Heart left ventricle (tissue), 16 donors: ENCODE measurements at regions of chr3 and their contacts with region 1.

Region 1: GRCh38 chr3:171829841-171830517 is 13.2 kb upstream of the TMEM212 start:
- DNase-seq: peak; percentile 84 to 92 (median 88)
- ATAC-seq: peak; percentile 92 to 95 (median 93)
- H3K4me3 ChIP-seq: no peak overlapping the region
- H3K27ac ChIP-seq: peak overlapping the region; percentile 32 to 81 (median 50)
- H3K4me1 ChIP-seq: peaks cover 0 to 49% (median 28%) of the 10 kb centered on the region in 12 donors
- H3K27me3 ChIP-seq: no peaks in the 10 kb centered on the region
- CTCF ChIP-seq: peak; percentile 40 to 87 (median 70)
- POLR2A ChIP-seq: no peak

Region 2: DNA sequence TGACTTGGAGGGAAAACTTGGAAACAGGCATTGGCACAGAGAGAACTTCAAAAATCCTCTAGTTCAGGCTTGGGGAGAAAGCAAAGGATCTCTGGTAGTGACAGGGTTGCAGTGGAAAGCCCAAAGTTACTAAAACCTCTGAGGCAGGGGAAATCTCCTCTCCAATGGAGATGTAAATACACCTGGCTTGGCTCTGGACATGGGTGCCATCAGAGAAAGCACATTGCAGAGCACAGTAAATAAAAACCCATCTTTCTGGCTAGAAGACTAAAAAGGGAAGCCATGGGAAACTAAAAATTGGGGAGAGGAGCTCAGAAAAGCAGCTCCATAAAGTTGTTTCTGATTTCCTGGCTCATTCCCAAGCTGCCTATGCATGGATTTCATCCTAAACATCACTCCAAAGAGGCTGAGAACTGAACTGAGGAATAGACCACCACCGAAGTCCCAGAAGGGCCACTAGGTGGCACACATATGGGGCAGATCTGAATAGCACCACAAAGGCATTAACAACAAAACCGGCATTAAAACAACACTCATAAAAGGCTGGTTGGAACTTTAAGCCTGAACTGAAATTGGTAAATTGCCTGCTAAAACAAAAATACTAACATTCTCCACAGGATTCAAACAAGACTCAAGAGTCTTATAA is 126.1 kb before region 1 on chr3:
- intact Hi-C with region 1: loop called in 2 of 10 experiments (anchors 10 kb)
- DNase-seq: no peak
- ATAC-seq: no peak
- H3K4me3 ChIP-seq: no peak overlapping the region
- H3K27ac ChIP-seq: no peak overlapping the region
- H3K4me1 ChIP-seq: peaks cover 0 to 15% (median 0%) of the 10 kb centered on the region in 12 donors
- H3K27me3 ChIP-seq: no peaks in the 10 kb centered on the region
- CTCF ChIP-seq: peak in 11 of 12 donors; percentile 16 to 53 (median 36)
- POLR2A ChIP-seq: no peak

Region 3: DNA sequence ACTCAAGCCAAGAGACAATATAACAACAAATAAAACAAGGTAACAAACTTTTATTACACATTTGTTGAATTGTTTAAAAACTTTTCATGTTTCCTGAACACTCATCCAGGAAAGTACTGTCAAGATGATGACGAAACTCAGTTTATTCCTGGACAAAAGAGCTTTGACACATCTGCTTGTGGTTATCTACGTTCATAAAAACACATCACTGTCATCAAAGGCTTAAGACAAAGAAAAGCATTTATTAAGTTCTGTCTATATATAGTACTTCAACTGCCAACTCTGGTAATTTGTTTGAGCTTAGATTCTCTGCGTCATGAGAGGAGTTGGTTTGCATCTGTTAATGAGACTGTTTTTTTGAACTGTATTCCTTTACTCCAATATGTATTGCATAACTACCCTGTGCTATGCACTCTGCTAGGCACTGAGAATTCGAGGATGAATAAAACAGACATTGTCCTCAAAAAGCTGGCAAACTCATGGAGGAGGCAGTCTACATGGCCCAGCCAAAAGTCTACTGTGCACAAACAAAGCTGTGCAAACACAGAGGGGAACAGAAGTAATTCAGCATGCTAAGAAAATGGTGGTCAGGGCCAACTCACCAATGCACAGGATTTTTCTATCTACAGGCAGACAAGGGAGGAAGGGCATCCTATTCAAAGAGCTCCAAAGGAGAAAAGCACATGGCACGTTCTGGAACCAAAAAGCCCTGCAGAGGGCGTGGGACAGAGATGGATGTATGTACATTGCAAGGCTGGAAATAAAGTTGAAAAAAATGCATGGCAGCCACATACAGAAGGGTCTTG is 41.2 kb before region 1 on chr3:
- intact Hi-C with region 1: no loop called
- DNase-seq: no peak
- ATAC-seq: peak in 3 of 4 donors; percentile 52 to 54 (median 53)
- H3K4me3 ChIP-seq: no peak overlapping the region
- H3K27ac ChIP-seq: peak overlapping the region in 3 of 12 donors; percentile 7 to 12 (median 10)
- H3K4me1 ChIP-seq: peaks cover 0 to 43% (median 18%) of the 10 kb centered on the region in 12 donors
- H3K27me3 ChIP-seq: no peaks in the 10 kb centered on the region
- CTCF ChIP-seq: no peak
- POLR2A ChIP-seq: no peak

Region 4: GRCh38 chr3:171809821-171810628 is 20.0 kb before region 1 on chr3 and contains the start of gene PLD1:
- intact Hi-C with region 1: loop called in 1 of 10 experiments (anchors 2 kb)
- DNase-seq: peak; percentile 87 to 94 (median 92)
- ATAC-seq: peak; percentile 59 to 92 (median 85)
- H3K4me3 ChIP-seq: peak within 1 kb of the TSS; percentile 42 to 91 (median 72)
- H3K27ac ChIP-seq: peak within 1 kb of the TSS; percentile 53 to 95 (median 92)
- H3K4me1 ChIP-seq: peaks cover 3 to 70% (median 25%) of the 10 kb centered on the region in 12 donors
- H3K27me3 ChIP-seq: no peaks in the 10 kb centered on the region
- CTCF ChIP-seq: peak in 3 of 12 donors; percentile 26 to 39 (median 36)
- POLR2A ChIP-seq: no peak
- total RNA-seq, gene PLD1: 44.5 to 106 (median 61.4) TPM

Region 5: GRCh38 chr3:172317984-172318383 is 488.0 kb after region 1 on chr3:
- intact Hi-C with region 1: loop called in 3 of 10 experiments (anchors 10 kb)
- DNase-seq: peak; percentile 71 to 82 (median 75)
- ATAC-seq: peak; percentile 21 to 74 (median 72)
- H3K4me3 ChIP-seq: no peak overlapping the region
- H3K27ac ChIP-seq: peak overlapping the region; percentile 61 to 91 (median 83)
- H3K4me1 ChIP-seq: peaks cover 20 to 96% (median 91%) of the 10 kb centered on the region in 12 donors
- H3K27me3 ChIP-seq: no peaks in the 10 kb centered on the region
- CTCF ChIP-seq: no peak
- POLR2A ChIP-seq: no peak